OCI-LY7 (cell line): ENCODE measurements at regions of chr18 and their contacts with region 1.

Region 1: DNA sequence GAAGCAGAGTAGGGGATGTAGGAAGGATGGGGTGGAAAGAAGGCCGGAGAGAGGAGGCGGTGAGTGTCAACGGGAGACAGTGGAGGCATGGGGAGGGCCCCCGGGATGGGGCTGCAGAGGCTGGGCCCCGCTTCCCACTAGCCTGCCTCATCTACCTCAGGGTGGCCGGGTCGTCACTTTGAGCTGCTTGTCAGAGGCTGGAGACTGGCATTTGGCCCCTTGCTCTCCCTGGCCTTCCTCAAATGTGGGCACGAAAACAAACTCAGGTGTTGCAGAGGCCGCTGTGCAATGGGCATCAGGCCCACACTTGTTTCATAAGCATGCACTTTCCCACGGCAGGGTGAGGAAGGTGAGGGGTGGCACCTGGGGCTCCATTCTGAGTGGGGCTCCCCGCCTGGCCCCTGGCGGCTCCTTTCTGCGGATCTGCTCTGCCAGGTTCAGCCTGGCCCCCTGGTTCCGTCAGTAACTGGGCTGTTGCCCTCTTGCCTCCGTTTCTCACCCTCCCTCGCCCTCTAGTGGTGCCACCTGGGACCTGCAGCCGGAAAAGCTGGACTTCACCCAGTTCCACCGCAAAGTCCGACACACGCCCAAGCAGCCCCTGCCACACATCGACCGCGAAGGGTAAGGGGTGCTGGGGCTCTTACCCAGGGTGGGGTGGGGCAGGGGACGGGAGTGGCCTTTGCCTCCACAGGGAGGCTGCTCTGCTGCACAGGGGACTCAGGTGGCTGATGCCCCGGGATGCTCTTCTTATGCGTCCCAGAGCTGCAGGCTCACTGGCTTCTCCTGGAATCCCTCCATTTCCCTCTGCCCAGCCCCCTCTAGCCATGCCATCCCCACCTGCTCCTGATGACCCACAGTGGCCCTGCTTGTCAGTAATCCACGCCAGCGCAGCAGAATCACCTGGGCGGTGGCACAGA is 125.4 kb downstream of the CTIF start:
- DNase-seq: peak; percentile 25
- H3K4me3 ChIP-seq: no peak overlapping the region
- H3K27ac ChIP-seq: no peak overlapping the region
- H3K4me1 ChIP-seq: peaks cover 6% of the 10 kb centered on the region
- CTCF ChIP-seq: peak; percentile 75

Region 2: DNA sequence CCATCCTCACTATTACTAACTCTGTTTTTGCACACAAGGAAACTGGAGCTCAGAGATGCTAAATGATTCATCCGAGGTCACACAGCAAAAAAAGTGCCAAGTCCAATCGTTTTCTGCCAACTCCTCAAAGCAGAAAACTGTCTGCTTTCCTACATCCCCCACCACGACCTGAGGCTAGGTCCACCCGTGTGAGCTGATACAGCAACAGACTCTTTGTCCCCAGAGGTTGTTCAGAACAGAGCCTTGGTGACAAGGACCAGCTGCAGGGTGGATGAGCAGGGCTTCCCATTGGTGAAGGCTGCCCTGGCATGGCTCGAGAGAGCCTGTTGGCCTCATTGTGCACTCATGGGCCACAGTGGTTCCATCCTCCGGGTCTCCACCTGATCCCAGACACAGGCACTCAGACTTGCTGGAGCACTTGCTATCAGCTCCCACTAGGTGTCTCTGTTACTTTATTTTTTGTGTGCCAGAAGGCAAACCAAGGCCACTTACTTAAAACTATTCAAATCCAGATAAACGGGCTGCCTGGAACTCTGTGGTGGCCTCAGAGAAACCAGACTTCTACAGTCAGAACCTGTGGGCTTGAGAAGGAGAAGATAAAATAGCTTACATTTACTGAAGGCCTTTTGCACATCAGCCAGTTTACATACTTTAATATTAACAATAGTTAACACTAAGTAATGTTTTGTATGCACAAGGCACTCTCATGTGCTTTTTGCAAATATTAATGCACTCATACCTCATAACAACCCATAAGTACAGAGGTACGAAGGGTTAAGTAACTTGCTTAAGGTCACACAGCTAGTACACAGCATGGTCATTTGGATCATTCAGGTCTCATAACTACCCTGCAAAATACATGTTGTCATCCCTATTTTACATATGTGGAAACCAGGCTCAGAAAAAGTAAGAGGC is 188.3 kb before region 1 on chr18:
- CTCF ChIA-PET with region 1: no interaction called
- POLR2A ChIA-PET with region 1: no interaction called
- intact Hi-C with region 1: loop called (anchors 1 kb)
- DNase-seq: peak; percentile 52
- H3K4me3 ChIP-seq: no peak overlapping the region
- H3K27ac ChIP-seq: no peak overlapping the region
- H3K4me1 ChIP-seq: no peaks in the 10 kb centered on the region
- CTCF ChIP-seq: peak; percentile 80

Region 3: GRCh38 chr18:48622911-48623431 is 41.2 kb before region 1 on chr18:
- CTCF ChIA-PET with region 1: no interaction called
- POLR2A ChIA-PET with region 1: no interaction called
- intact Hi-C with region 1: loop called (anchors 5 kb)
- DNase-seq: peak; percentile 80
- H3K4me3 ChIP-seq: peak overlapping the region; percentile 27
- H3K27ac ChIP-seq: peak overlapping the region; percentile 87
- H3K4me1 ChIP-seq: peaks cover 48% of the 10 kb centered on the region
- CTCF ChIP-seq: no peak